ENCODE measurements at regions of chr19 and their contacts with region 1.

Region 1: GRCh38 chr19:18589380-18590272 is 1.0 kb downstream of the REX1BD start:
- DNase-seq: peak; percentile 63 to 71
- ATAC-seq: peak; percentile 48 to 80 (median 69)
- H3K4me3 ChIP-seq: peak overlapping the region; percentile 63 to 95 (median 86)
- H3K27ac ChIP-seq: peak overlapping the region; percentile 55 to 97 (median 92)
- H3K4me1 ChIP-seq: peaks cover 3 to 55% (median 29%) of the 10 kb centered on the region in 9 donors
- H3K27me3 ChIP-seq: peaks cover 0 to 3% (median 0%) of the 10 kb centered on the region in 7 donors
- CTCF ChIP-seq: peak in 5 of 9 donors; percentile 8 to 41 (median 26)

Region 2: GRCh38 chr19:18291590-18292461 is 297.8 kb before region 1 on chr19:
- intact Hi-C with region 1: no loop called
- DNase-seq: peak; percentile 87 to 93
- ATAC-seq: peak; percentile 80 to 86 (median 84)
- H3K4me3 ChIP-seq: peak overlapping the region; percentile 62 to 89 (median 76)
- H3K27ac ChIP-seq: peak overlapping the region; percentile 94 to 100 (median 99)
- H3K4me1 ChIP-seq: peaks cover 3 to 48% (median 26%) of the 10 kb centered on the region in 9 donors
- H3K27me3 ChIP-seq: no peaks in the 10 kb centered on the region
- CTCF ChIP-seq: no peak

Region 3: GRCh38 chr19:18503971-18504885 is 85.4 kb before region 1 on chr19:
- intact Hi-C with region 1: no loop called
- DNase-seq: no peak
- ATAC-seq: peak in 1 of 8 donors; percentile 1
- H3K4me3 ChIP-seq: no peak overlapping the region
- H3K27ac ChIP-seq: peak overlapping the region in 9 of 10 donors; percentile 32 to 90 (median 66)
- H3K4me1 ChIP-seq: peaks cover 76 to 100% (median 100%) of the 10 kb centered on the region in 9 donors
- H3K27me3 ChIP-seq: no peaks in the 10 kb centered on the region
- CTCF ChIP-seq: no peak

Region 4: GRCh38 chr19:18557474-18558201 is 32.0 kb before region 1 on chr19 and contains the start of gene KXD1:
- intact Hi-C with region 1: no loop called
- DNase-seq: peak; percentile 96 to 99
- ATAC-seq: peak; percentile 96 to 99 (median 98)
- H3K4me3 ChIP-seq: peak within 1 kb of the TSS; percentile 71 to 96 (median 87)
- H3K27ac ChIP-seq: peak within 1 kb of the TSS; percentile 66 to 98 (median 95)
- H3K4me1 ChIP-seq: peaks cover 4 to 45% (median 28%) of the 10 kb centered on the region in 9 donors
- H3K27me3 ChIP-seq: no peaks in the 10 kb centered on the region
- CTCF ChIP-seq: no peak
- total RNA-seq, gene KXD1: 35.6 to 63.9 (median 45.6) TPM

Region 5: DNA sequence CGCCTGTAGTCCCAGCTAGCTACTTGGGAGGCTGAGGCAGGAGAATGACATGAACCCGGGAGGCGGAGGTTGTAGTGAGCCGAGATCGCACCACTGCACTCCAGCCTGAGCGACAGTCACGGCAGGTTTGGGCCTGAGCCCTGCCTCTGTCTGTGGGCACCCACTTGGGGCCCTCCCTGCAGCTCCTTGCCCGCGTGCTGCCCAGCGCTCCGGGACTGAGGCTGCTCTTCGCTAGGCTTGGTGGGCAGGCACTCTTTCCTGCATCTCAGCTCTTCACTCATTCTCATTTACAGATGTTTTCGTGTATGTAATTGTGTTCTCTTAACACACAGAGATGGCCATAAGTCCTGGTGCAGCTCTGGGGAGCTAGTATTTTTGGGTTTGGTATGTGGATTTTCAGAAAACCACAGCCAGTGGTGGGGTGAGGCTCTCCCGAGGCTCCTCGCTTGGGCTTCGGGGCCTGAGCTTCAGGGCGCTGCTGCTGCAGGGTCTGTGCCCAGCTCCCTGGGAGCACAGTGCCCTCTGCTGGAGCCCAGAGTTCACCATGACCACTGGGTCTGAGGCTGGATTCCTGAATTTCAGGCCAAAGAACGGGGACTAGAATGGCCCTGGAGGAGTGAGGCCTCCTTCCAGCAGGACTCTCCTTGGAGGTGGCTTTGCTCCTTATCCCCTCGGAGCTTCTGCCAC is 257.4 kb after region 1 on chr19:
- intact Hi-C with region 1: loop called in 9 of 10 experiments (anchors 1 to 10 kb)
- DNase-seq: peak; percentile 77 to 83
- ATAC-seq: peak; percentile 70 to 79 (median 75)
- H3K4me3 ChIP-seq: no peak overlapping the region
- H3K27ac ChIP-seq: peak overlapping the region in 8 of 10 donors; percentile 58 to 92 (median 86)
- H3K4me1 ChIP-seq: peaks cover 29 to 94% (median 76%) of the 10 kb centered on the region in 9 donors
- H3K27me3 ChIP-seq: no peaks in the 10 kb centered on the region
- CTCF ChIP-seq: peak; percentile 65 to 93 (median 89)

Region 6: DNA sequence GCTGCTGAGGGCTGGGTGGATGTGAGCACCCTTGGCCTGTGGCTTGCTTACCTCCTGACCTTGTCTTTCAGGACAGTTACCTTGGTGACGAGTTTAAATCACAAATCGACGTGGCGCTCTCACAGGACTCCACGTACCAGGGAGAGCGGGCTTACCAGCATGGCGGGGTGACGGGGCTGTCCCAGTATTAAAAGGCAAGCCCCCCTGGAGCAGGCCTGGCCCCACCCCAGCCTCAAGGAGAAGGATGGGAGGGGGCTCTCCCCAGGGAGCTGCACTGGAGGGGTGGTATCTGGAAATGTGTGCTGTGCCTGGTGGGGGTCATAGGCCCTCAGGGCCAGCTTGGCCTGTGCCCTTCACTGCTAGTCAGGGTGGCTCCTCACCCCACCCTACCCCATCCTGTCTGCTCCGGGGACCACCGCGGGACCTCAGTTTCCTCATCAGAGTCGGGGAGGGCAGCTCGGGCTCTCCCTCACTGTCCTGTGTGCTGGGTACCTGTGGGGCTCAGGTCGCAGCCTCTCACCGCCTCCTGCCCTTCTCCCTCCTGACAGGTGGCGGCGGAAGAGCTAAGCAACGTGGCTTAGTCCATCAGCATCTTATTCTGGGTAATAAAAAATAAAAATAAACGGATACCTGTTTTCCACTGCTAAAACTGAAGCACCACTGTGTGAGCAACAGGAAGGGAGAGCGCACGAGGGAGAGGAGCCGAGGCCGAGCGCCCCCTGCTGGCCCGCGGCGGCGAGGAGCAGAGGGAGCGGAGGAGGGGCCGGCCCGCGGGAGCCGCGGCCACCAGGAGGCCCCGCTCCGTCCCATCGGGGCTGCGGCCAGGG is 276.6 kb after region 1 on chr19:
- intact Hi-C with region 1: loop called in 1 of 10 experiments (anchors 5 kb)
- DNase-seq: peak; percentile 59 to 73
- ATAC-seq: peak; percentile 74 to 90 (median 82)
- H3K4me3 ChIP-seq: no peak overlapping the region
- H3K27ac ChIP-seq: no peak overlapping the region
- H3K4me1 ChIP-seq: peaks cover 0 to 29% (median 17%) of the 10 kb centered on the region in 9 donors
- H3K27me3 ChIP-seq: peaks cover 0 to 25% (median 15%) of the 10 kb centered on the region in 7 donors
- CTCF ChIP-seq: peak; percentile 95 to 100 (median 99)